Endothelial cell of umbilical vein (primary cell): ENCODE measurements at regions of chr17 and their contacts with region 1.

Region 1: GRCh38 chr17:1447052-1447451 is 9.0 kb downstream of the CRK start:
- DNase-seq: peak; percentile 82
- H3K4me3 ChIP-seq: peak overlapping the region in 2 of 3 experiments; percentile 21 to 58
- H3K27ac ChIP-seq: peak overlapping the region; percentile 85
- H3K4me1 ChIP-seq: peaks cover 16% of the 10 kb centered on the region
- H3K27me3 ChIP-seq: no peaks in the 10 kb centered on the region
- CTCF ChIP-seq: no peak
- POLR2A ChIP-seq: peak; percentile 56

Region 2: GRCh38 chr17:1216217-1217088 is 230.6 kb before region 1 on chr17:
- CTCF ChIA-PET with region 1: no interaction called
- POLR2A ChIA-PET with region 1: no interaction called
- dilution Hi-C with region 1: no loop called
- intact Hi-C with region 1: no loop called
- DNase-seq: no peak
- H3K4me3 ChIP-seq: no peak overlapping the region
- H3K27ac ChIP-seq: no peak overlapping the region
- H3K4me1 ChIP-seq: no peaks in the 10 kb centered on the region
- H3K27me3 ChIP-seq: peaks cover 4 to 6% of the 10 kb centered on the region in 2 experiments
- CTCF ChIP-seq: no peak
- POLR2A ChIP-seq: no peak

Region 3: GRCh38 chr17:1422907-1423306 is 24.1 kb before region 1 on chr17:
- CTCF ChIA-PET with region 1: interaction called, 3 read pairs
- POLR2A ChIA-PET with region 1: interaction called, 4 read pairs
- dilution Hi-C with region 1: no loop called
- intact Hi-C with region 1: loop called (anchors 2 kb)
- DNase-seq: peak; percentile 98
- H3K4me3 ChIP-seq: peak overlapping the region in 1 of 3 experiments; percentile 3
- H3K27ac ChIP-seq: peak overlapping the region; percentile 90
- H3K4me1 ChIP-seq: peaks cover 25% of the 10 kb centered on the region
- H3K27me3 ChIP-seq: no peaks in the 10 kb centered on the region
- CTCF ChIP-seq: no peak
- POLR2A ChIP-seq: no peak

Region 4: DNA sequence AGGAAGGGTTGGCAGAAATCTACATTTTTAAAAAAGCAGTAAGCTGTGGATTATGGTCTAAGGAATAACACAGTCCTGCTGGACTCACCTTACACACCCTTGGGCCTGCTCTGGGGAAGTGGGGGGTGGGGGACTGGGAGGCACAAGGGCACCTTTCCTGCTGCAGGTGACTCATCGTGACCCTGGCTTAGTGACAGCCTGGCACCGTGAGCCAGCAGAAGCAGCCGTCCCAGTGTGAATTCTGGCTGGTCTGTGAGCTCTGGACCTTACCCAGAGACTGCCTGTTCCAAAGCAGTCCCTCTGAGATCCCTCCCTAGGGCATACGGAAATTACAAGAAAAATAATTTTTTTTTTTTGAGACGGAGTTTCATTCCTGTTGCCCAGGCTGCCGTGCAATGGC is 13.2 kb after region 1 on chr17:
- CTCF ChIA-PET with region 1: no interaction called
- POLR2A ChIA-PET with region 1: no interaction called
- dilution Hi-C with region 1: no loop called
- intact Hi-C with region 1: no loop called
- DNase-seq: peak; percentile 49
- H3K4me3 ChIP-seq: no peak overlapping the region
- H3K27ac ChIP-seq: no peak overlapping the region
- H3K4me1 ChIP-seq: peaks cover 21% of the 10 kb centered on the region
- H3K27me3 ChIP-seq: no peaks in the 10 kb centered on the region
- CTCF ChIP-seq: no peak
- POLR2A ChIP-seq: no peak

Region 5: GRCh38 chr17:1716076-1716995 is 269.3 kb after region 1 on chr17:
- CTCF ChIA-PET with region 1: no interaction called
- POLR2A ChIA-PET with region 1: no interaction called
- dilution Hi-C with region 1: no loop called
- intact Hi-C with region 1: no loop called
- DNase-seq: peak; percentile 100
- H3K4me3 ChIP-seq: peak overlapping the region; percentile 72 to 97 (median 76)
- H3K27ac ChIP-seq: peak overlapping the region; percentile 96
- H3K4me1 ChIP-seq: peaks cover 34% of the 10 kb centered on the region
- H3K27me3 ChIP-seq: no peaks in the 10 kb centered on the region
- CTCF ChIP-seq: no peak
- POLR2A ChIP-seq: peak; percentile 99